ENCODE measurements at regions of chr11 and their contacts with region 1.

Region 1: GRCh38 chr11:44538375-44539054 is 26.9 kb upstream of the CD82 start:
- DNase-seq: peak; percentile 62 to 83
- ATAC-seq: peak; percentile 83 to 93 (median 89)
- H3K4me3 ChIP-seq: no peak overlapping the region
- H3K4me3 Mint-ChIP-seq: no peak overlapping the region
- H3K27ac ChIP-seq: no peak overlapping the region
- H3K27ac Mint-ChIP-seq: no peak overlapping the region
- H3K4me1 ChIP-seq: peaks cover 4% of the 10 kb centered on the region
- H3K4me1 Mint-ChIP-seq: no peaks in the 10 kb centered on the region
- H3K27me3 ChIP-seq: no peaks in the 10 kb centered on the region
- H3K27me3 Mint-ChIP-seq: no peaks in the 10 kb centered on the region
- CTCF ChIP-seq: peak; percentile 95

Region 2: DNA sequence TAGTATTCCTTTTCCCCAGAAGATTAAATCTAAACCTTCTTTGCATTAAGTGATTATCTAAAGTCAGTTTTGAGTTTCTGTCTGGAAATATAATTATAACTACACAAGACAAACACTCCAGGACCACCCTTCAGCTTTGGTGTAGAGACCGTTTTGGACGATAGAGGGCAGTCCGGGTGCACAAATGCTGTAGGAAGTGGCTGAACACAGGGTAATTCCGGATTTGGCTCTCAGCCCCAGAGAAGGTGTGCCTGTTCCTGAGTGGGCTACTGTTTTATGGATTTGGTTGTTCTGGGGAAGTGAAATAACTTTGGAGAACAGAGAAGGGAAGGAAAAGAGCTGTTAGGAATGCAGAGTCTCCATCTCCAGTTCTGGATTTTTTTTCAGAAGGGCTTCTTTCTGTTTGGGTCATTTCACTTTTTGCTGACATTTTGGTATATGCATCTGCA is 428.3 kb before region 1 on chr11:
- intact Hi-C with region 1: loop called (anchors 1 kb)
- DNase-seq: peak; percentile 37 to 73
- ATAC-seq: peak; percentile 87 to 100 (median 100)
- H3K4me3 ChIP-seq: no peak overlapping the region
- H3K4me3 Mint-ChIP-seq: peak overlapping the region; percentile 14
- H3K27ac ChIP-seq: no peak overlapping the region
- H3K27ac Mint-ChIP-seq: peak overlapping the region; percentile 14 to 61
- H3K4me1 ChIP-seq: peaks cover 3% of the 10 kb centered on the region
- H3K4me1 Mint-ChIP-seq: peaks cover 9 to 20% of the 10 kb centered on the region in 2 donors
- H3K27me3 ChIP-seq: no peaks in the 10 kb centered on the region
- H3K27me3 Mint-ChIP-seq: no peaks in the 10 kb centered on the region
- CTCF ChIP-seq: peak; percentile 78

Region 3: GRCh38 chr11:44286268-44286880 is 252.1 kb before region 1 on chr11:
- intact Hi-C with region 1: loop called (anchors 1 kb)
- DNase-seq: peak; percentile 34 to 75
- ATAC-seq: peak; percentile 58 to 84 (median 67)
- H3K4me3 ChIP-seq: no peak overlapping the region
- H3K4me3 Mint-ChIP-seq: no peak overlapping the region
- H3K27ac ChIP-seq: no peak overlapping the region
- H3K27ac Mint-ChIP-seq: no peak overlapping the region
- H3K4me1 ChIP-seq: no peaks in the 10 kb centered on the region
- H3K4me1 Mint-ChIP-seq: peaks cover 0 to 4% of the 10 kb centered on the region in 2 donors
- H3K27me3 ChIP-seq: no peaks in the 10 kb centered on the region
- H3K27me3 Mint-ChIP-seq: no peaks in the 10 kb centered on the region
- CTCF ChIP-seq: peak; percentile 94

Region 4: GRCh38 chr11:44464741-44465140 is 73.8 kb before region 1 on chr11:
- intact Hi-C with region 1: no loop called
- DNase-seq: no peak
- ATAC-seq: no peak
- H3K4me3 ChIP-seq: no peak overlapping the region
- H3K4me3 Mint-ChIP-seq: no peak overlapping the region
- H3K27ac ChIP-seq: no peak overlapping the region
- H3K27ac Mint-ChIP-seq: no peak overlapping the region
- H3K4me1 ChIP-seq: no peaks in the 10 kb centered on the region
- H3K4me1 Mint-ChIP-seq: no peaks in the 10 kb centered on the region
- H3K27me3 ChIP-seq: no peaks in the 10 kb centered on the region
- H3K27me3 Mint-ChIP-seq: peaks cover 2 to 5% of the 10 kb centered on the region in 2 donors
- CTCF ChIP-seq: no peak